Caco-2 (cell line): ENCODE measurements at regions of chr4 and their contacts with region 1.

Region 1: DNA sequence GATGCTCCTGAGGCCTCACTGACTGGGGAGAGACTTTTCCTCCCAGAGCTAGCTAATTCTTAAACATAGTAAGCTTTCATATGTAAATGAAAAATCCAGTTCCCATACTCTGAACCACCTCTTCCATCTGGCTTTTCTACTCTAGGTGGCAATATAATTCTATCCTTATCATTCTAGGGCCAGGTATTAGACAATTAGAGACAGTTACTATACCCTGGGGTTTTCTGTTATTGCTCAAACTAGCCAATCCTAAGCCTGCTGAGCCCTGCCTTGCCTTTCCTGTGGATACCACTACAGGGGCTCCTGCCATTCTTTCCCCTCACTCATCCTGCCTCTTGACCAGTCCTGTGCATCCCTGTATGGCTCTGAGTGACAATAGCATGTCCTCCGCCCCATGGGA is 552.0 kb downstream of the STIM2 start:
- DNase-seq: no peak
- H3K4me3 ChIP-seq: no peak overlapping the region
- H3K4me3 Mint-ChIP-seq: no peak overlapping the region
- H3K27ac Mint-ChIP-seq: no peak overlapping the region
- H3K4me1 ChIP-seq: peaks cover 14% of the 10 kb centered on the region; the same call in 1 of the 2 replicates
- H3K4me1 Mint-ChIP-seq: no peaks in the 10 kb centered on the region
- H3K27me3 ChIP-seq: no peaks in the 10 kb centered on the region
- H3K27me3 Mint-ChIP-seq: no peaks in the 10 kb centered on the region
- CTCF ChIP-seq: no peak

Region 2: GRCh38 chr4:27643101-27643500 is 230.5 kb after region 1 on chr4:
- CTCF ChIA-PET with region 1: no interaction called
- POLR2A ChIA-PET with region 1: no interaction called
- intact Hi-C with region 1: loop called (anchors 10 kb)
- DNase-seq: no peak
- H3K4me3 ChIP-seq: no peak overlapping the region
- H3K4me3 Mint-ChIP-seq: no peak overlapping the region
- H3K27ac Mint-ChIP-seq: peak overlapping the region; percentile 21
- H3K4me1 ChIP-seq: peaks cover 8% of the 10 kb centered on the region
- H3K4me1 Mint-ChIP-seq: peaks cover 10% of the 10 kb centered on the region
- H3K27me3 ChIP-seq: no peaks in the 10 kb centered on the region
- H3K27me3 Mint-ChIP-seq: no peaks in the 10 kb centered on the region
- CTCF ChIP-seq: no peak

Region 3: GRCh38 chr4:27881705-27882104 is 469.1 kb after region 1 on chr4:
- CTCF ChIA-PET with region 1: no interaction called
- POLR2A ChIA-PET with region 1: no interaction called
- intact Hi-C with region 1: no loop called
- DNase-seq: no peak
- H3K4me3 ChIP-seq: no peak overlapping the region
- H3K4me3 Mint-ChIP-seq: no peak overlapping the region
- H3K27ac Mint-ChIP-seq: no peak overlapping the region
- H3K4me1 ChIP-seq: no peaks in the 10 kb centered on the region
- H3K4me1 Mint-ChIP-seq: no peaks in the 10 kb centered on the region
- H3K27me3 ChIP-seq: no peaks in the 10 kb centered on the region
- H3K27me3 Mint-ChIP-seq: no peaks in the 10 kb centered on the region
- CTCF ChIP-seq: no peak